ENCODE measurements at regions of chr14 and their contacts with region 1.

Region 1: GRCh38 chr14:93788543-93789227 is 400 bp upstream of the PRIMA1 start:
- DNase-seq: peak; percentile 66
- ATAC-seq: peak; percentile 96

Region 2: DNA sequence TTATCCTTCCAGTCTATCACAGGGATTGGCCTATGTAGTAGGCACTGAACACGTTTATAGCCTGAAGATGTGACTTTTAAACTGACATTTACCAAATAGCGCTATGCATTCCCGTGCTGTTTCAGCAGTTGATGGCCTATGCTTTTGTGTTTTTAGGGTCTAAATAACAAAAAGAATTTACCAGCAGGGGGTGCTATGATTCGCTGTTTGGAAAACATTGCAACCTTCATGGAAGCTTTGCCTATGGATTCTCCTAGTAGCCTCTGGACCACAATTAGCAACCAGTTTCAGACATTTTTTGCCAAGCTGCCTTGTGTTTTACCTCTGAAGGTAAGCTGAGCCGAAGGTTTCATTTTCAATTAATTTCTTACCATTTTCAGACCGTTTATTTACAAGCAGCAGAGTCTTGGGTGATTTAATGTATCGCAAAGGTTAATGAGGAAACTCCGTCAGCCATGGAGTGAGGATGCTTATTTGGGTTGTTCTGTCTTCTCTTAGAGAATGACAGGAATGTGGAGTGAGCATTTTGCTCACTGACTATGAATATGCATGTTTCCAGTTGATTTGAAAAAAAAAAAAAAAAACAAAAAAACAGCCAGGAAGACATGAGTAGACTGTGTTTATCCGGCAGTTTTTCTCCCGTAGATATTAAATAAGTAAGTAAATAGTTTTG is 133.5 kb before region 1 on chr14:
- intact Hi-C with region 1: loop called (anchors 5 kb)
- DNase-seq: no peak
- ATAC-seq: peak; percentile 62

Region 3: GRCh38 chr14:93691042-93691780 is 97.5 kb before region 1 on chr14:
- intact Hi-C with region 1: no loop called
- DNase-seq: no peak
- ATAC-seq: no peak

Region 4: DNA sequence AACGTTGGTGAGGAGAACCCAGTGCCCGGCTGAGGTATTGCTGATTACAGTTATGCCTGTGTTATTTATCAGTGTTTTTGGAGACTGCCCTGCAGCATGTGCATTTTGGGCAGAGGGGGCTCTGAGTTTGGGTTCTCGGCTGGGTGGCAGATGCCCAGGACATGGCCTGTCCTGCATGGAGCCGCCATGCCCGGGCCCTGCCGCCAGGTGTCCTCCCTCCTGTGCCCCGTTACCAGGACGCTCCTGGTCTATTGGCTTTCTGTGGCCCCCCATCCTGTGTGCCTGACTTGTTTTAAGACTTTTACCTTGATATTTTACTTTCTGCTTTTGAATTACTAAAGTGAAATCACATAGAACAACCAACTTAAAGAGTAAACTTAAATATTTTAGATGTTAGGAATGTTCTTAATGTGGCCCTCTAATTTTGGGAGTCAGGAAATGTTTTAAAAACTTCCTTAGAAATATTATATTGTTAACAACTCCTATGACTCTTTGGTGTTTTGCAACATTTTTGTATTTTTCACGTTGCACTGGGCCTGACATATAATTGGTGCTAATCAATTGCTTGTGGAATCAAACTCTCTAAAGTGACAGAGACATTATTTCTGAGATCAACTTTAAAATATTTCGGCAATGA is 52.2 kb before region 1 on chr14:
- intact Hi-C with region 1: loop called (anchors 5 kb)
- DNase-seq: no peak
- ATAC-seq: peak; percentile 78